Posterior vena cava (tissue), 2 donors: ENCODE measurements at regions of chr15 and their contacts with region 1.

Region 1: DNA sequence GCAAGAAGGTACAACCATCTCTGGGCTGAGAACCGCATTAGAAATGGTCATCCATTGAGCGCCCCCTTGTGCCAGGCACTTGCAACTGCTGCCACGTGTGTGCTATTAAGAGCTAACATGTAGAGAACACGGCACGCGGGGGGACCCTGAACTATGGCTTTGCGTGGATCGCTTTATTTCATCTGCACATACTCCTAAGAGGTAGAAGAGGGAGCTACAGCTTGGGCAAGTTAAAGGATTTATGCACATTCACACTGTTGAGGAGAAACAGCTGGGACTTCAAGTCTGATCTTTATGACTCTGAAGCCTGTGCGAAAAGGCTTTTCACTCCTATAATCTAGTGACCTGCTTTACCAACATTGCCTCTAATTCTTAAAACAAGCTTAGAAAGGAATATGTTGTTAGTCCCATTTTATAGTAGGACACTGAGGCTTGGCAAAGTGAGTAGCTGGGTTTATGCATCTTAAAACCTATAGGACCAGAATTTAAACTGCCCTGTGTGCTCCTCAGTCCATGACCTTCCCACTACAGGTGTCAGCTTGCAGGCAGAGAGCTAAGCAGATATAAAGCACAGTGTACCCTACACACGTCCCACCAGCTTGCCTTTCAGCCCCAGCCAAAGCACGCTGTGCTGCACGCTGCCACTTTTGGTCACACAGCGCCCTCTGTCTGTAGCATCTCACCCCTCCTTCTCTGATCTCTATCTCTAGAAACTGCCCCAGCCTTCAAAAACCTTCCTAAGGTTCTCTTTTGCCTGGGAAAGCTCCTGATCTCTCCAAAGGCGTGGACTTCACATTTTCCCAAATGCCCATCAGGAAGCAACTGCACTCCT is 57.8 kb downstream of the STARD5 start:
- DNase-seq: peak; percentile 93

Region 2: GRCh38 chr15:81106560-81106959 is 159.6 kb before region 1 on chr15:
- intact Hi-C with region 1: loop called (anchors 5 to 10 kb)
- DNase-seq: no peak

Region 3: DNA sequence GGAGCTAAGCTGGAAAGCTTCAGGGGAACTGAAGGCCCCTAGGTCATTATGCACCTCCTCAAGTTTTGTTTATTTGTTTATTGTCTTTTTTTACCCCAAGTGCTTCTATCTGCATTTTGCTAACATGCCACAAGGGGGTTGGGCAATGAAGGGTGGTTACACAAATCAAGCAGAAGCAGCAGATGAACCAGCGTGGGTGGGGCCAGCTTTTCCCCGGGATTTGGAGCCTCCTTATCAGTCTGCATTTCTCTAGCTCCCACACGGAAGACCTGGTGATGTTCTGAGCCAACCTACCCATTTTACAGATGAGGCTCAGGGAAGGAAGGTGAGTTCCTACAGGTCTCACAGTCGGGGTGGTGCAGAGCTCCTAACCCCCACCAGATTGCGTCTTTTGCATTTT is 91.1 kb after region 1 on chr15:
- intact Hi-C with region 1: no loop called
- DNase-seq: no peak

Region 4: DNA sequence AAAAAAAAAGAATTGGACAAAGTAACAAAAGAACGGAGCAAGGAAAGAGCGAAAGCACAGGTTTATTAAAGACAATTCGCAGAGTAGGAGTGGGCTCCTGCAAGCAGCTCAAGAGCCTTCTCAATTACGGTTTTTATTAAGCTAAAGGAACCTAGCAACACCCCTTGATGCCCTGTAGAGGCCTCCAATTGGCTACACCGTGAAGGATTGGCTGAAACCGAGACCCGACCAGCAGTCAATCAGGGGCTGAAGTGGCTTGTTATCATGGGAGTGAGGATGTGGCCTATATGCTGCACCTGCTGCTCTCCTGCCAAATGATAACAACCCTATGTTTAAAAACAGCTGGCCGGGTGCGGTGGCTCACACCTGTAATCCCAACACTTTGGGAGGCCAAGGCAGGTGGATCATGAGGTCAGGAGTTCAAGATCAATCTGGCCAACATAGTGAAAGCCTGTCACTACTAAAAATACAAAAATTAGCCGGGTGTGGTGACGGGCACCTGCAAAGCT is 1463.9 kb after region 1 on chr15:
- intact Hi-C with region 1: no loop called
- DNase-seq: no peak